Dorsolateral prefrontal cortex (tissue), 120 donors: ENCODE measurements at regions of chr3 and their contacts with region 1.

Region 1: DNA sequence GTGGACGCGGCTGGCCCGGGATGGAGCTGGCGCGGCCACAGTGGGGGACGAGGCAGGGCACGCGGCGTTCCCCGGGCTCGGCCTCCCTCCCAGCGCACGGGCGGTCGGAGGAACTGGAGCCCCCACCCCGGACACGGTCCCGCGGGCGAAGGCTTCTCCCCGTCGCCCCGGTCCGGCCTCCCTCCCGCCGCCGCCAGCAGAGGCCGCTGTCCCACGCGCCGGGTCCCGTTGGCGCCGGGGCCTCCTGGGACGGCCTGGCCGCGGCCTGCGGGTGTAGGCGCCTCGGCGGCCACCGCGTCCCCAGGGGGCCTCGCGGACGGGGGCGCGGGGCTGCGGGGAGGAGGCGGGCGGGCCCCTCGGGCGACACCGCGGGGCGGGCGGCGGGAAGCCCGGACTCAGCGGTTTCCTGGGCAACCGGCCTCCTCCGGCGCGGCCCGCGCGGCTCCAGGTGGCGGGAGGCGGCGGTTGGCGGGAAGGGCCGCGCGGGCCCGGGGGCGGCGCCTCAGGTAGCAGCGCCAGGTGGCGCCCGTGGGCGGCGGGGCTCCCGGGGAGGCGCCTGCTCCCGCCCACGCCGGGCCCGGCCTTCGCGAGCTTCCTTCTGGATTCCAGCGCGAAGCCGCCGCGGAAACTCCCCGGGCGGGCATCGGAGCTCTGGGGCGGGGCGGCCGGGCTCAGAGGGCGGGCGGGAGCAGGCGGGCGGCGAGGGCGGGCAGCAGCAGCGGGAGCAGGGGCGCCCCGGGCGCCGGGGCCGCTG is 26.7 kb downstream of the MELTF start:
- DNase-seq: peak in 8 of 10 donors; percentile 44 to 87 (median 69)
- H3K4me3 ChIP-seq: peak overlapping the region; percentile 39 to 87 (median 68)
- H3K27ac ChIP-seq: peak overlapping the region in 58 of 59 donors; percentile 45 to 93 (median 84)
- H3K27me3 ChIP-seq: no peaks in the 10 kb centered on the region
- CTCF ChIP-seq: peak; percentile 33 to 89 (median 69)

Region 2: DNA sequence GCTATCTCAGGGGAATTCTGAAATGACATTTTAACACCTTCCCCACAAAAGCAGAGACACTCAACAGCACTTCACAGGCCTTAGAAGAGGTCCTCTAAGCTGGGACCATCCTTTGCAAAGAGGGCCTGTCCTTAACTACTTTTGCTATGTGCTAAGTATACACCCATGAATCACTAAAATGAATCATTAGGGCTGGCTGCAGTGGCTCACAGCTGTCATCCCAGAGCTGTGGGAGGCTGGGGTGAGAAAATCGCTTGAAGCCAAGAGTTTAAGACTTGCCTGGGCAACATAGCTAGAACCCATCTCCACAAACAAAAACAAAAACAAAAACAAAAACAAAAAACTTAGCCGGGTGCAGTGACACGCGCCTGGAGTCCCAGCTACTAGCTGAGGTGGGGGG is 80.6 kb after region 1 on chr3:
- intact Hi-C with region 1: loop called in 1 of 2 experiments (anchors 10 kb)
- DNase-seq: peak in 6 of 10 donors; percentile 22 to 70 (median 60)
- H3K4me3 ChIP-seq: no peak overlapping the region
- H3K27ac ChIP-seq: peak overlapping the region in 50 of 59 donors; percentile 8 to 83 (median 50)
- H3K27me3 ChIP-seq: no peaks in the 10 kb centered on the region
- CTCF ChIP-seq: no peak

Region 3: DNA sequence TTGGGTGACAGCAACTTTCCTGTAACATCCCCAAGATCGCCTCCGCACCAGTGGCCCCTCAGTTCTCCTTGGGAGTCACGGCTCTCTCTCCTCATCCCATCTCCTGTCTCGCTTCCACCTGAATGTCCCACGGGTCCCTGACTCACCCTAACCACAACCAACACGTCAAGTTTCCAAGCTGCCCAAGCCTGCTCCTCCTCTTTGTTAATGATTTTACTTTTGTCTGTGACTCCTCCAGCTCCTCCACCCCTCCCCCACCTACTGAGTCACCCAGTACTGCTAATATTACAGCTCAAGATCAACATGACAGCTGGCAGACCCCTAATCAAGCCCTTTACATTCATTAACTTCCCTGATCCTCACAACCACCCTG is 513.6 kb after region 1 on chr3:
- intact Hi-C with region 1: loop called (anchors 10 kb)
- DNase-seq: no peak
- H3K4me3 ChIP-seq: no peak overlapping the region
- H3K27ac ChIP-seq: no peak overlapping the region
- H3K27me3 ChIP-seq: no peaks in the 10 kb centered on the region
- CTCF ChIP-seq: no peak